ENCODE measurements at regions of chr20 and their contacts with region 1.

Region 1: DNA sequence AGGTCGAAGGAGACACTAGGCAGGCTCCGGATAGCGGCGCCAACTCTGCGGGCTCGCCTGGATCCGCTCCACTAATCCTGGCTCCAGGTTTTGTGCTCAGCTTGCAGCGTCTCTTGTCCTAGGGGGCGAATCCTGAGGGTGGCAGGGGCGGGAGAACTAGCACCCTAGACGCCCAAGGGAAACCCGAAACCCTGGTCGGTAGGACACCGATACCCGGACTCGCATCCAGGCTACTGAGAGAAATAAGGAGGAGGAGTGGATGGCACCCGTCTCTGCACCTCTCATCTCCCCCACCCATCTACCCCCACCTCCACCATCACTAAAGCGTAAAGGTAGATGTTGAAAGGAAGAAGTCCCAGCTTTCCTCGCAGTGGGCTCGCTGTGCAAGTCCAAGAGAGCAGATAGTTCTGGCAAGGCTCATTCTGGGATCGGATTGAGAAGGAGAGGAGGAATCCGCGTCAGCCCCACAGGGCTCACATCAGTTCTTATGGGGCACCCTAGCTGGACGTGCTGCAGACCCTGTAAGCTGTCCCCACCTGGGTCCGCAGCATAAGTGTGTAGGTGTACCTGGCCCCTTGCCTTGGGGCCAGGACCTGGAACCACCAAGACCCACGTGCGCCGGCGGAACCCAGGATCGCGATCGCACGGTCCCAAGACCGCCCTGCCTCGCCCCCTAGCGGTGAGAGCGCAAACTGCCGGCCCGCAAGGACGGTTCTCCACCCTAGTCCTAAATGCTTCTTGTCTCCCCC is 6.9 kb downstream of the SLC32A1 start:
- DNase-seq: peak; percentile 73
- ATAC-seq: peak; percentile 87
- H3K4me3 ChIP-seq: peak overlapping the region; percentile 46 to 64
- H3K27ac ChIP-seq: peak overlapping the region; percentile 57
- H3K4me1 ChIP-seq: peaks cover 4 to 21% of the 10 kb centered on the region in 2 experiments; a peak in 3 of 4 replicates
- H3K27me3 ChIP-seq: no peaks in the 10 kb centered on the region
- CTCF ChIP-seq: peak; percentile 64 to 99 (median 99); a peak in 5 of 6 replicates
- POLR2A ChIP-seq: no peak
- RAD21 ChIP-seq: peak; percentile 59

Region 2: DNA sequence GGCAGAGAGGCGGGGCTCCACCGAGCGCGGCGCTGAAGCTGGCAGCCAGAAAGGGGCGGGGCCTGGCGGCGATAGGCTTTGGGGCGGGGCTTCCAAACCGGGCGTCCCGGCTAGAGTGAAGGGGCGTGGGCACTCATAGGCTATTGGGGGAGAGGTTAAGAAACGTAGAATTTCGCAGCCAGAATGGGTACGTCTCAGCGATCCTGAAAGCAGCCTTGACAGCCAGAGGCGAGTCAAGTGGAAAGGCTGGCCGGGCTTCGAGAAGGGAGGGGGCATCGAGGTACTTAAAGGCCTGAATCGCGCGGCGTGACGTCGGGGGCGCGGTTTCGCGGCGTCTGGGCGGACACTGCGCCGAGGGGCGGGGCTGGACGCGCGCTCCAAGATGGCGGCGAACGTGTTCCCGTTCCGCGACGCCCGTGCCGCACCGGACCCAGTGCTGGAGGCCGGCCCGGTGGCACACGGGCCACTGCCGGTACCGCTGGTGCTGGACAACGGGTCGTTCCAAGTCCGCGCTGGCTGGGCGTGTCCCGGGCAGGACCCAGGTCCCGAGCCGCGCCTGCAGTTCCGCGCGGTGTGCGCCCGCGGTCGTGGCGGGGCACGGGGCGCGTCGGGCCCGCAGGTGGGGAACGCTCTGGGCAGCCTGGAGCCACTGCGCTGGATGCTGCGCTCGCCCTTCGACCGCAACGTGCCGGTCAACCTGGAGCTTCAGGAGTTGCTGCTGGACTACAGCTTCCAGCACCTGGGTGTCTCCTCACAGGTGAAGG is 17.1 kb after region 1 on chr20 and contains the start of gene ACTR5:
- CTCF ChIA-PET with region 1: interaction called, 6 read pairs
- POLR2A ChIA-PET with region 1: no interaction called
- RAD21 ChIA-PET with region 1: no interaction called
- intact Hi-C with region 1: loop called (anchors 1 kb)
- DNase-seq: peak; percentile 74
- ATAC-seq: peak; percentile 88
- H3K4me3 ChIP-seq: peak within 1 kb of the TSS; percentile 72 to 84
- H3K27ac ChIP-seq: peak within 1 kb of the TSS; percentile 82
- H3K4me1 ChIP-seq: peaks cover 8 to 24% of the 10 kb centered on the region in 2 experiments; a peak in 3 of 4 replicates
- H3K27me3 ChIP-seq: no peaks in the 10 kb centered on the region
- CTCF ChIP-seq: no peak
- POLR2A ChIP-seq: peak; percentile 35
- RAD21 ChIP-seq: no peak
- total RNA-seq, gene ACTR5: 22.0 TPM

Region 3: DNA sequence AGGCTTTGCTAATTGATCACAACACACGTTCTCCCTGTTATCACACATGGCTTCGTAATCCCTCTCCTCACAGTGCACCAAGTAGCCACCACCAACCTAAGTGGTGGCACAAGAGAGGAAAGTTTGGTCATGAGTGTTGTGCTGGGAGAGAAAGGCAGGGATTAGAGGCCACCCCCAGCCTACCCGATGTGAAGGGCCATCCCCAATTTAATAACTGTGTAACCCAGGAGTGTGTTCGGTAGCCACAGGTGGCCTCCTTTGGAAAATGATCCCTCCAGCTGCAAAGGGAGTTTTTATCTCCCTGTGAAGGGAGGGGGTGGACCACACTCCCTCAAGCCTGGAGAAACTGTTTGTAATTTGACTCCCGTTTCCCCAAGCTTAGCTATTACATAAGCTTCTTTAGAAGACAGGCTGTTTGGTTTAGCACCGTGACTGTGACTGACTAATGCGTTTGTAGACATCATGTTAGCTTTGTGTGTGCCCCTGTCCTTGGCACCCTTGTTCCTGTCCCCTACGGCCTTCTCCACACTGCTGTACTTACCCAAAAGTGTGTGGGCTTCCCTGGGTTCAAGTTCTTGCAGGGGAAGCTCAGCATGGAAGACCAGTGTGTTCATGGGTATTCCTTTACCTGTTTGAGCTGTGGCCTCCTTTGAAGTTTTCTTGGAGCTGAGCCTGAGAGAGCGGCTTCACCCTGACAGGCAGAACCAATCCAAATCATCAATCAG is 94.9 kb after region 1 on chr20:
- CTCF ChIA-PET with region 1: no interaction called
- POLR2A ChIA-PET with region 1: no interaction called
- RAD21 ChIA-PET with region 1: no interaction called
- intact Hi-C with region 1: no loop called
- DNase-seq: peak; percentile 15
- ATAC-seq: peak; percentile 75
- H3K4me3 ChIP-seq: no peak overlapping the region
- H3K27ac ChIP-seq: no peak overlapping the region; the same call in 1 of the 2 replicates
- H3K4me1 ChIP-seq: peaks cover 19 to 22% of the 10 kb centered on the region in 2 experiments
- H3K27me3 ChIP-seq: no peaks in the 10 kb centered on the region; the same call in 1 of the 2 replicates
- CTCF ChIP-seq: no peak
- POLR2A ChIP-seq: no peak
- RAD21 ChIP-seq: no peak